ENCODE measurements at regions of chr5 and their contacts with region 1.

Region 1: DNA sequence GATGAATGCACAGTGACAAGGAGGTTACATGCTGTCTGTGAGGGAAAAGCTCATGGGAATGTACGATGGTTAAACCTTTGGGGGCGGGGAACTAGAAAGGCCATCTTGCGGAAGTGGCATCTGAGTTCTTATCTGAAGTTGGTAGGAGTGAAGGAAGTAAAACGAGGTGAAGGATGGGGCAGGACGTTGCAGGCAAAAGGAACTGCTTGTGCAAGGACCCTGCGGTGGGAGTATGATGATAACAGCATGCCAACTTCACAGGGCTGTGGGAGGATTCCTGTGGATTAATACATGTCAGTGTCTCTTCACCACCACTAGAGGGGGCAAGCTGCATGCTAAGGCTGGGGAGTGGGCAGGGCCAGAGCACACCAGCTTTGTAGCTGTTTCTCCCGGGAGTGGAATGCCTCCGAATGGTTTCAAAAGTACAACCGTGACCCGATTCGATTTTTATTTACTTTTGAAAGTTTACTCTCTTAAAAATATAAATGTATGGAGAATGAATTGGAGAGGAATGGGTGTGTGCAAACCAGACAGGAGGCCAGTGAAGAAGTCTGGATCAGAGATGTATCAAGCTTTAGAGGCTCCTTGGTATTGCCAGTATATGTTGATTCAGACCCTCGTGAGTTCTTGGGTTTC is 62.5 kb downstream of the CYFIP2 start:
- DNase-seq: peak; percentile 66 to 71
- H3K4me3 ChIP-seq: no peak overlapping the region
- H3K27ac ChIP-seq: no peak overlapping the region
- H3K4me1 ChIP-seq: no peaks in the 10 kb centered on the region
- H3K27me3 ChIP-seq: no peaks in the 10 kb centered on the region
- CTCF ChIP-seq: peak; percentile 50 to 93 (median 86)
- POLR2A ChIP-seq: no peak

Region 2: DNA sequence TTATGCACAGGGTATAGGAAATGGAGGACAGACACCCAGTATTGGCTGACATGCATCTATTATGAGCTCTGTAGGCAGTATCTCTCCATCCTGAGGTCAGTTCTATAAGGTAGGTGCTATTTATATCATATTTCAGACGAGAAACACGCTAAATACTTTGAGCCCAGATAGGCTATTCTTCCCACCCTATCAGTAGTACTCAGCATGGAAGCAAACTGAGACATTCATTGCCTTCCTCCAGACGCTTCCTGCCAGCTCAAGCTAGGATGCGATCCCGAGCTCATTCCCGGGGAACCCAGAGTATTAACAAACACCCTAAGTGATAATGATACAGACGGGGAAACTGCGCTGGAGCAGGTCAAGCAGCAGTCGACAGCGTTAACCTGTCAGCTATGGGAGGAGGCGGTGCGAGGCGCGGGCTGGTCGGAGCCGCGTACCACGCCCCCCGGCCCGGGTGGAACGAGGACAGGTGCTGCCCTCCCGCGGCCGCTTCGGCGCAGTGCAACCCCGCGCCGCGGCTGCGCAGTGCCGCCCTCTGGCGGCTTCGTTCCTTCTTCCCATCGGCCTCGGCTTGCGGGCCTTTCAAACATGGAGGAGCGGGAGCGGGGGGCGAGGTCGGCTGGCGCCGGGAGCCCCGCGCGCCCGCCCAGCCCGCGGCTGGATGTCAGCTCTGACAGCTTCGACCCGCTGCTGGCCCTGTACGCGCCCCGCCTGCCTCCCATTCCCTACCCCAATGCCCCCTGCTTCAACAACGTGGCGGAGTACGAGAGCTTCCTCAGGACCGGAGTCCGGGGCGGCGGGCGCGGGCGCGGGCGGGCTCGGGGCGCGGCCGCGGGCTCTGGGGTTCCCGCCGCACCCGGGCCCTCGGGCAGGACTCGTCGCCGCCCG is 415.0 kb after region 1 on chr5 and contains the start of gene LSM11:
- intact Hi-C with region 1: loop called (anchors 10 kb)
- DNase-seq: peak; percentile 90 to 91
- H3K4me3 ChIP-seq: peak within 1 kb of the TSS; percentile 19 to 73 (median 58)
- H3K27ac ChIP-seq: no peak within 1 kb of the TSS
- H3K4me1 ChIP-seq: peaks cover 10 to 15% of the 10 kb centered on the region in 2 donors
- H3K27me3 ChIP-seq: no peaks in the 10 kb centered on the region
- CTCF ChIP-seq: peak; percentile 74 to 100 (median 100)
- POLR2A ChIP-seq: peak in 1 of 2 donors; percentile 50
- total RNA-seq, gene LSM11: 2.2 to 4.7 (median 3.8) TPM

Measured in thyroid gland (tissue), 4 donors.